Heart right ventricle (tissue), 16 donors: ENCODE measurements at regions of chr16 and their contacts with region 1.

Region 1: DNA sequence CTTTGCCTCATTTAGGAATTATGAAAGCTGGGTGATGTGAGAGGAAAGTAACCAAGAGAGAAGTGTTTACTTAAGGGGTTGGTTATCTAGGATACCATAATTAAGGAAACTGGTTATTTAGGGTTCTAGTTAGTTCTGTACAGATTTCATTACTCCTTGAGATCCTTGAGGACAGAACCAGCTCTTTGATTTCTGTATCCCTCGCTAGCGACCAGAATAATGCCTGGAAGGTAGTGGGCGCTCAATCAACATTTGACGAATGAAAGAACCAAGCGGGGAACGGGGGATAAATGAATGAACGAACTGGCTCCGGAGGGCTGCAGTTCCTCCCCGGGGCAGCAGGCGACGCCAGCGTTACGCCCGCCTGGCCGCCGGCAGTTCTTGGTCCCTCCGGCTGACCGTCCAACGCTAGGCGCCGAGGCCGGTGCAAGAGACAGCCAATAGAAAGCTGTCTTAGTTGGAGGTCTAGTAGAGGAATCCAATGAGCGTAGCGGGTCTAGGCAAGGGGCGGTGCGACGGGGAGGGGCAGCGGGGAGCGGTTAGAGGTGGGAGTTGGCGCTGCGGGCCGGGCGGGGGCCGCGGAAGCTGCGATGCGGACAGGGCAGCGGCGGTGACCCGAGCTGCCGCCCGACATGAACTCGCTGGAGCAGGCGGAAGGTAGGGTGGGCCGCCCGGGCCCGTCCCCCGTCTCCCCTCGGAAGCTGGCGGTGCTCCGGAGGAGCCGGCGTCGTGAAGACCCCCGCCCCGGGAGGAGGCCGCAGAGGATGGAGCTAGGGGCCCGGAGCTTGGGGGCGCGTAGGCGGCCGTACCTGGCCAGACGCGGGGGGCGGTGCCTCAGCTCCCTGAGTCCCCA is at the start of gene CNEP1R1:
- DNase-seq: peak; percentile 93 to 96
- ATAC-seq: peak; percentile 100
- H3K4me3 ChIP-seq: peak within 1 kb of the TSS; percentile 80 to 100 (median 96)
- H3K27ac ChIP-seq: peak within 1 kb of the TSS; percentile 36 to 96 (median 90)
- H3K4me1 ChIP-seq: peaks cover 0 to 31% (median 17%) of the 10 kb centered on the region in 9 donors
- H3K27me3 ChIP-seq: no peaks in the 10 kb centered on the region
- CTCF ChIP-seq: peak; percentile 97 to 100 (median 100)
- total RNA-seq, gene CNEP1R1: 12.4 to 20.6 (median 17.6) TPM

Region 2: GRCh38 chr16:50065624-50066481 is 40.9 kb after region 1 on chr16 and contains the start of gene HEATR3:
- intact Hi-C with region 1: loop called in 4 of 10 experiments (anchors 2 to 5 kb)
- DNase-seq: peak; percentile 92 to 96
- ATAC-seq: peak; percentile 94 to 98 (median 96)
- H3K4me3 ChIP-seq: peak within 1 kb of the TSS; percentile 70 to 100 (median 92)
- H3K27ac ChIP-seq: peak within 1 kb of the TSS; percentile 87 to 100 (median 96)
- H3K4me1 ChIP-seq: peaks cover 11 to 32% (median 25%) of the 10 kb centered on the region in 9 donors
- H3K27me3 ChIP-seq: no peaks in the 10 kb centered on the region
- CTCF ChIP-seq: peak in 1 of 9 donors; percentile 14
- total RNA-seq, gene HEATR3: 8.7 to 15.8 (median 11.2) TPM

Region 3: DNA sequence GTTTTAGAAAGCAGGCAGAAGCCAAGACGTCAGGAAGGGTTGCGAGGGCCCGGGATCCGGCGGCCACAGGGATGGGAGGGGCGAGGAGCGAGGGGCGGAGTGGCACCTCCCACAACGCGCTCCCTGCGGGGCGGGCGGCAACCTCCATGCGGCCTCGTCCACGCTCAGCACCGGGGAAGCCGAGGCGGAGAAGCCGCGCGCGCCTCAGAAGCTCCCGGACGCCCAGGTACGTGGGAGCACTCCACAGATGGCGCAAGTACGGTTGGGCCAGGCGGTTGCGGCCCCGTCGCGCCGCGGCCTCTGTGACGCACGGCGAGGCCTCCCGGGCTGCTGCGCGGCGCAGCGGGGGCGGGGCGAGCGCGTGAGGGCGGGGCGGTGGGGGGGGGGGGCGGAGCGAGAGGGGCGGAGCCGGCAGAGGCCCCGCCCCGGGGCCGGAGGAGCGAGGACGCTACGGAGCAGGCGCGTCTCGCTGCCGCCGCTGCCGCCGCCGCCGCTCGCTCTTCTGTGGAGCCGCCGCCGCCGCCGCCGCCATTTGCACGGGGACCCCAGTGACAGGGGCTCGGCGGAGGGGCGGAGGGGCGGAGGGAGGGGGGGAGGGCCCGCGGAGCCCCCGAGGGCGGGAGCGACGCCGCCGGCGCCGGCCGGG is 128.0 kb after region 1 on chr16 and contains the start of gene TENT4B:
- intact Hi-C with region 1: loop called in 1 of 10 experiments (anchors 5 kb)
- DNase-seq: peak; percentile 89 to 90
- ATAC-seq: peak; percentile 93 to 97 (median 95)
- H3K4me3 ChIP-seq: peak within 1 kb of the TSS; percentile 58 to 98 (median 82)
- H3K27ac ChIP-seq: peak within 1 kb of the TSS; percentile 92 to 98 (median 96)
- H3K4me1 ChIP-seq: peaks cover 0 to 41% (median 29%) of the 10 kb centered on the region in 9 donors
- H3K27me3 ChIP-seq: no peaks in the 10 kb centered on the region
- CTCF ChIP-seq: no peak
- total RNA-seq, gene TENT4B: 4.4 to 8.6 (median 7.1) TPM

Region 4: GRCh38 chr16:50210266-50211038 is 185.5 kb after region 1 on chr16:
- intact Hi-C with region 1: loop called in 8 of 10 experiments (anchors 2 to 10 kb)
- DNase-seq: peak; percentile 72 to 82
- ATAC-seq: peak; percentile 86 to 95 (median 92)
- H3K4me3 ChIP-seq: no peak overlapping the region
- H3K27ac ChIP-seq: peak overlapping the region in 2 of 10 donors; percentile 9 to 39
- H3K4me1 ChIP-seq: peaks cover 7 to 51% (median 33%) of the 10 kb centered on the region in 9 donors
- H3K27me3 ChIP-seq: no peaks in the 10 kb centered on the region
- CTCF ChIP-seq: peak; percentile 41 to 90 (median 74)

Region 5: DNA sequence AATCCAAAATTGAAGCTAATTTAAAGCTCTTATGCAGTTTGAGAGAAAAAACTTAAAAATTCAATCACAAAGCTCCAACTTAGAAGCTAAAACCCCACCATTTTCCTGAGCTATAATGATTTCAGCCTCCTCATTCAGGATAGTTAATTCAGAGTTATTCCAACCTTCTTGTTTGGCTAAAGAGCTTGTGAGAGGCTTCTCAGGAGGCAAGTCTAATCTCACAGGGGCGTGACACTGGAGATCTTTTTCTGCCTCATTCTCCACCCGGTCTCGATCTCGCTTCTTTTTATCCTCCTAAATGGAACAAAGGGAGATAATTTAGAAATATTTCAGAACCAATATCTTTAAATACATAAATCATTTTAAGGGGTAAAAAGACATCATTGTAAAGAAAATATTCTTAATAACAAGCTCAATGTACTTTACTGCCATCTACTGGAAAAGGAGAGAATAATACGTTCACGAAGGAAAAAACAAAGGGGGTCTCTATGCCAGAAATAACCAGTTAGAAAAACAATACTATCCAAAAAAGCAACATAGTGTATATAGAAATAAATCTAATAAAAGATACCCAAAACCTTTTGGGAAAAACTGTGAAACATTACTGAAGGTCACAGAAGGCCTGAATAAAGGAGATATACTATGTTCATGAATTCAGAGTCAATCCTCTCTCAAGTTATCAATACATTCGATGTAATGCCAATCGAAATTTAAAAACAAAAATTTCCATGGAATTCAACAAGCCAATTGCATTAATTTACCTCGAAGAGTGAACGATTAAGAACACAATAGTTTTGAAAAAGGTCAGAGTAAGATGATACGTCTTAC is 329.9 kb after region 1 on chr16:
- intact Hi-C with region 1: loop called in 4 of 10 experiments (anchors 5 to 10 kb)
- DNase-seq: no peak
- ATAC-seq: no peak
- H3K4me3 ChIP-seq: no peak overlapping the region
- H3K27ac ChIP-seq: no peak overlapping the region
- H3K4me1 ChIP-seq: peaks cover 0 to 6% (median 0%) of the 10 kb centered on the region in 9 donors
- H3K27me3 ChIP-seq: no peaks in the 10 kb centered on the region
- CTCF ChIP-seq: peak; percentile 11 to 76 (median 64)

Region 6: DNA sequence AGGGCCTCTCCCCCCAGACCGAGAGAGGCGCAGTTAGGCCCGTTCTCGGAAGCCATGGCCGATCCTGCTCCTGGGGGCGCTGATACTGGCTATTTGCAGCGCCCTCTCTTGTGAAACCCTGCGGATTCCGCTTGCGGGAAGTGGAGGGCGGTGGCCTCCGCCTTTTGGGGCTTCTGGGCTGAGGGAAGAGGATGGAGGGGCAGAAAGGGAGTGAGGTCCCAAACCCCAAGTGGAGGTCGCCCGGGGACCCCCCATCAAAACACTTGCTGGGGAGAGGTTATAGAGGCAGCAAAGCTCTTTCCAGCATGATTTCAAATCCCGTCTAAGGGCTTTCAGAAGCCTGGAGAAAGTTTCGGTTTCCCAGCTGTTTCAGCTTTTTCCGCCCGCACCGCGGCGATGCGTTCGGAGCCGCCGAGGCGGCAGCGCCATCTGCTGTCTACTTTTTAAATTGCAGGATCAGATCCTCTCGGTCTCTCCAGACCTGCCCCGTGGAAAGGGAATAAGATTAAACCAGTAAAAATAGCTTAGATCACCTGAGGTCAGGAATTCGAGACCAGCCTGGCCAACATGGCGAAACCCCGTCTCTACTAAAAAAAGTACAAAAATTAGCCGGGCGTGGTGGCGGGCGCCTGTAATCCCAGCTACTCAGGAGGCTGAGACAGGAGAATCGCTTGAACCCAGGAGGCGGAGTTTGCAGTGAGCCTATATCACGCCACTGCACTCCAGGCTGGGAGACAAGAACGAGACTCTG is 640.4 kb after region 1 on chr16:
- intact Hi-C with region 1: loop called in 2 of 10 experiments (anchors 10 kb)
- DNase-seq: peak; percentile 78 to 83
- ATAC-seq: peak; percentile 70 to 93 (median 88)
- H3K4me3 ChIP-seq: peak overlapping the region; percentile 31 to 63 (median 52)
- H3K27ac ChIP-seq: peak overlapping the region in 9 of 10 donors; percentile 36 to 93 (median 79)
- H3K4me1 ChIP-seq: peaks cover 2 to 45% (median 17%) of the 10 kb centered on the region in 9 donors
- H3K27me3 ChIP-seq: no peaks in the 10 kb centered on the region
- CTCF ChIP-seq: peak; percentile 89 to 97 (median 92)

Region 7: GRCh38 chr16:50806099-50807062 is 781.5 kb after region 1 on chr16:
- intact Hi-C with region 1: loop called in 2 of 10 experiments (anchors 5 to 10 kb)
- DNase-seq: peak; percentile 67 to 85
- ATAC-seq: peak; percentile 90 to 95 (median 94)
- H3K4me3 ChIP-seq: peak overlapping the region in 9 of 10 donors; percentile 4 to 50 (median 41)
- H3K27ac ChIP-seq: peak overlapping the region in 8 of 10 donors; percentile 5 to 61 (median 29)
- H3K4me1 ChIP-seq: peaks cover 0 to 13% (median 6%) of the 10 kb centered on the region in 9 donors
- H3K27me3 ChIP-seq: no peaks in the 10 kb centered on the region
- CTCF ChIP-seq: peak; percentile 85 to 97 (median 92)